Tibial artery (tissue), 4 donors: ENCODE measurements at regions of chr2 and their contacts with region 1.

Region 1: DNA sequence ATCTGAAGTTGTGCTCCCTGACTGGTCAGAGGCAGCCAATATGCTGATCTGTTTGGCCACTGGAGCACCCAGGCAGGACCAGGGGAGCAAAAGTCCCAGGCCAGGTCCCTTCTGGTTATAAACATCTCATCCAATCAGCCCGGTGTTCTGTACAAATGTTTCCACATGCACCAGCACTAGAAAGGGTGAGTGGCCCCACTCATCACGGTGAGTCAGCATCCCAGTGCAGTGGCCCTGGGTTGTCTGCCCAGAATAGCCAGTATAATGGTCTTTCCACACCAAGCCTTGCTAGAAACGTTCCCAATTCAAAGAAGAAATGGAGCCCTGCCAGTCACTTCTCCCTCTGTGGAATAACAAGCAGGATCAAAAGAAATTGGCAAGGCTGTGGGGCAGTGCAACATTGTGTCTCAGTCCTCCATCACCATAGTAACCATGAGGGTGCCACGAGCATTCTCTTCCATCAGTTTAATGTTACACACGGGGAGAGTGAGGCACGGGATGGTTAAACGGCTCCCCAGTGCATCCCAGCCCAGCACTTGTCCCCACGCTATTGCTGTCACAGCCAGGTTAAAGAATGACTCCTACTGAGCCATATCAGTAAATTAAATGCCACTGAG is 174.9 kb downstream of the SEPTIN10 start:
- DNase-seq: peak; percentile 72 to 94
- H3K4me3 ChIP-seq: no peak overlapping the region
- H3K27ac ChIP-seq: peak overlapping the region; percentile 86 to 96
- H3K4me1 ChIP-seq: peaks cover 12 to 68% (median 49%) of the 10 kb centered on the region in 4 donors
- H3K27me3 ChIP-seq: no peaks in the 10 kb centered on the region
- CTCF ChIP-seq: no peak

Region 2: DNA sequence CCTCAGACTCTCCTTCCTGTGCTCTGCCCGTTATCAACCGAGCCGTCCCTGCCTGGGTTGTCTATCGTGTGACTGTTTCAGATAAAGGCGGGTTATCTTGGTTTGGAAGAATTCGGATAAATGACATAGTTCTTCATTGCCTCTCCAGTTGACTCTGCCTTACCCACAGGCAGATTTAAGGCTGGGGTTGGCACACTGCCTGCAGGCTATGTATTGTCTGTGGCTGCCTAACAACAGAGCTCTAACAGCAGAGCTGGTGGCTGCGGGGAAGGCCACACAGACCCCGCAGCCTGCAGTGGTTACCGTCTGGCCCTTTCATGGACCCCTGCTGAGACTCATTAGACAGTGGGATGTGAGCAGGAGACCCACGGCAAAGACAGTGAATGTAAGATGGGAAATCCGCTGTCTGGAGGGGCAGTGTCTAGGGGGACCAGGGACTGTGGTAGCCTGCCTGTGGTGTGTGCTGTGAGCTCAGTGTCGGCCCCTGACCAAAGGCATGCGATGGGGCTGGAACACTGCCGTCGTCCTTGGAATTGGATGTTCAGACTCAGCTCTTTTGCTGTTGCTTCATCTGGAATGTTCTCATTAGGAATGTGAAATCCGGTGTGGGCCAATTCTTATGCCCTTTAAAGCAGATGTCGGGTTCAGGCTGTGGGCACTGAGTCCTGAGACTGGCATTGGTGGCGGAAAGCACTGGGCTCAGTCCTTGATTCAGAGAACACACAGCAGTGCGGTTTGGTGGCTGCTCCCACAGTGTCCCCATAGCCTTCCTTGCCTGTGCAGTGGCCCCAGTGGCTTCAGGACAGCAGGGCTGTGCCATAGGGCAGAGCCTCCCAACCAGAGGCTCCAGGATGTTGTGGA is 265.3 kb before region 1 on chr2:
- intact Hi-C with region 1: loop called (anchors 5 kb)
- DNase-seq: peak; percentile 93 to 96
- H3K4me3 ChIP-seq: peak overlapping the region in 1 of 2 donors; percentile 14
- H3K27ac ChIP-seq: peak overlapping the region; percentile 91 to 94
- H3K4me1 ChIP-seq: peaks cover 6 to 89% (median 59%) of the 10 kb centered on the region in 4 donors
- H3K27me3 ChIP-seq: no peaks in the 10 kb centered on the region
- CTCF ChIP-seq: no peak

Region 3: DNA sequence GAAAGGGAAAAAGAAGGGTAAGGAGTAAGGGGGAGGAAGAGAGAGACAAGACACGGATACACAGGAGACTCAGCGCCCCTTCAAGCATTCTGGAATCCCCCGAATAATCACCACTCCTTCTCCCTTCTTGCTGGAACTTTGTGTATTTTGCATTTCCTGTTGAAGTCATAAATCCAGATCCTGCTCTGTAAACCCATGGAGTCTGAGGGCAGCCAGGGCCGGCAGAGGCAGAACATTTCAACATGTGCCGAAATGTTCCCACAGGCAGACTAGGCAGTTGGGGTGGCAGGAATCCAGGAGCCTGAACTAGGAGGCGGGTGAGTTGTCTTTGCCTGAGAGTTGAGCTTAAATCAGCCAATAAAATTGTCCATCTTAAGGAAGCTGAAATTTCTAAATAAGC is 116.8 kb before region 1 on chr2:
- intact Hi-C with region 1: loop called (anchors 5 kb)
- DNase-seq: peak; percentile 98 to 99
- H3K4me3 ChIP-seq: peak overlapping the region in 1 of 2 donors; percentile 41
- H3K27ac ChIP-seq: peak overlapping the region; percentile 79 to 92
- H3K4me1 ChIP-seq: peaks cover 3 to 97% (median 84%) of the 10 kb centered on the region in 4 donors
- H3K27me3 ChIP-seq: no peaks in the 10 kb centered on the region
- CTCF ChIP-seq: no peak

Region 4: GRCh38 chr2:109475531-109476210 is 36.8 kb after region 1 on chr2:
- intact Hi-C with region 1: loop called (anchors 5 kb)
- DNase-seq: no peak
- H3K4me3 ChIP-seq: no peak overlapping the region
- H3K27ac ChIP-seq: peak overlapping the region; percentile 55 to 59
- H3K4me1 ChIP-seq: peaks cover 0 to 72% (median 47%) of the 10 kb centered on the region in 4 donors
- H3K27me3 ChIP-seq: no peaks in the 10 kb centered on the region
- CTCF ChIP-seq: no peak